Heart left ventricle (tissue), 16 donors: ENCODE measurements at regions of chr15 and their contacts with region 1.

Region 1: GRCh38 chr15:40382580-40383456 is at the start of gene KNSTRN:
- DNase-seq: peak; percentile 90 to 94 (median 92)
- ATAC-seq: peak; percentile 96 to 99 (median 98)
- H3K4me3 ChIP-seq: peak within 1 kb of the TSS; percentile 64 to 96 (median 80)
- H3K27ac ChIP-seq: peak within 1 kb of the TSS in 7 of 12 donors; percentile 30 to 65 (median 48)
- H3K4me1 ChIP-seq: peaks cover 0 to 31% (median 12%) of the 10 kb centered on the region in 12 donors
- H3K27me3 ChIP-seq: no peaks in the 10 kb centered on the region
- CTCF ChIP-seq: no peak
- POLR2A ChIP-seq: peak in 1 of 2 donors; percentile 34
- total RNA-seq, gene KNSTRN: 8.9 to 20.1 (median 9.9) TPM

Region 2: DNA sequence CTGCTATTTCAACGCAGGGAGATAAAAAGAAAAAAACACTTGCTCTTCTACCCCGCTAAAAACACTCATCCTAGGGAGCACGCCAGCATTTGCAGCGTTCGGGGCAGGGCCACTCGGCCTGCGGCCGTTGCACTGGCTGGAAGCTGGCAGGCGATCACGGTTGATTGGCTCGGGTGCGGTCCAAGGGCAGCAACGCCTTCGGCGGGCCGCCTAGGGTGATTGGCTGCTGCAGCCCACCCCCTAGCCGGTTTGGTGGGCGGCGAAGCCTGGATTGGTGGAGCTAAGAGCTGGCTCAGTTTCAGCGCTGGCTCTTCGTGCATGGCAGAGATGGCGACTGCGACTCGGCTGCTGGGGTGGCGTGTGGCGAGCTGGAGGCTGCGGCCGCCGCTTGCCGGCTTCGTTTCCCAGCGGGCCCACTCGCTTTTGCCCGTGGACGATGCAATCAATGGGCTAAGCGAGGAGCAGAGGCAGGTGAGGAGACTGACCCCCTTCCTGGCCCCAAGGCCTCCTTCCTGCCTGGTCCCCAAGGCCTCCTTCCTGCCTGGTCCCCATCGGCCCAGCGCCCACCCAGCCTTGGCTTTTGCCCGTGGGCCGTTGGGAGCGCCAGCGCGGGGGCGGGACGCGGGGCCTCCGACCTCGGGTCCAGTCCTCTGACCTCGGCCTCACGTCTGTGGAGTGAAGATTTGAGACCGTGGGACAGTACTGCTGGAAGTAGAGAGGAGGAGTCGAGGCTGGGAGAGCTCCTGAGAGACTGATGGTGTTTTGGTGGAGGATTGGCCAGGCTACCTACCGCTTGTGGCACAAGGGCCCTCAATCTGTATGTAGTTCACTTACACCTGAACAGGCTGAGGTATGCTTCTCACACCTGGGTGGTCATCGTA is 22.9 kb after region 1 on chr15 and contains the start of gene IVD:
- intact Hi-C with region 1: loop called in 1 of 10 experiments (anchors 2 kb)
- DNase-seq: peak; percentile 96 to 98 (median 98)
- ATAC-seq: peak; percentile 100
- H3K4me3 ChIP-seq: peak within 1 kb of the TSS; percentile 52 to 95 (median 74)
- H3K27ac ChIP-seq: peak within 1 kb of the TSS in 11 of 12 donors; percentile 57 to 85 (median 77)
- H3K4me1 ChIP-seq: peaks cover 0 to 31% (median 17%) of the 10 kb centered on the region in 12 donors
- H3K27me3 ChIP-seq: no peaks in the 10 kb centered on the region
- CTCF ChIP-seq: peak in 1 of 12 donors; percentile 6
- POLR2A ChIP-seq: peak in 1 of 2 donors; percentile 81
- total RNA-seq, gene IVD: 72.1 to 130 (median 99.8) TPM